ENCODE measurements at regions of chr19 and their contacts with region 1.

Region 1: GRCh38 chr19:18304458-18305310 is 18.2 kb downstream of the LSM4 start:
- DNase-seq: peak; percentile 82 to 89
- ATAC-seq: peak; percentile 78 to 87 (median 79)
- H3K4me3 ChIP-seq: peak overlapping the region; percentile 59
- H3K4me3 Mint-ChIP-seq: peak overlapping the region; percentile 86
- H3K27ac ChIP-seq: peak overlapping the region; percentile 99
- H3K27ac Mint-ChIP-seq: peak overlapping the region; percentile 96 to 97
- H3K4me1 ChIP-seq: peaks cover 64% of the 10 kb centered on the region
- H3K4me1 Mint-ChIP-seq: peaks cover 17 to 23% of the 10 kb centered on the region in 2 donors
- H3K27me3 ChIP-seq: no peaks in the 10 kb centered on the region
- H3K27me3 Mint-ChIP-seq: no peaks in the 10 kb centered on the region
- CTCF ChIP-seq: no peak

Region 2: DNA sequence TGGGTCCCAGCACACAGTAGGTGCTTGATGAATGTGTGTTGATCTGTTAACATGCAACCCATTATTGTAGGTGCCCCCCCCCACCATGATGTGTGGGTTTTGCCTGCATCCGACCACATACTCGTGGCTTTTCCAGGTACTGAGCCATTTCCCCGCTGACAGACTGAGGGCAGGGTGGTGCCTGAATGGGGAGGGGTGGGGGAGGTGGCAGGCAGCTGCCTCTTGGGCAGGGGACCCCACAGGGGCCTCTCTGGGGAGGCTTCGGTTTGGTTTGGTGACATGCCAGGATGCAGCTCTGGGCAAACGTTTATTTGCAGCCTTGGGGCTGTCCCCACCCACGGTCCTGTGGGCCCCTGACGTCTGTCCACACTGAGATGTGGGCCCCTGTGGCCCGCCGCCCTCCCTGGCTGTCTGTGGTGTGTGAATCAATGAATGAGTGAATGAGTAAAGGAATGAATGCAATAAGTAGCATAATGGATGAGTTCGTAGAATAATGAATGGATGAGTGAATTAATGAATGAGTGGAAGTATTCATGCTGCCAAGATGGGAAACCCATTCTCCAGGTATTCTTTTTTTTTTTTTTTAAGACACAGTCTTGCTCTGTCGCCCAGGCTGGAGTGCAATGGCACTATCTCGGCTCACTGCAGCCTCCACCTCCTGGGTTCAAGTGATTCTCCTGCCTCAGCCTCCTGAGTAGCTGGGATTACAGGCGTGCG is 14.2 kb before region 1 on chr19:
- intact Hi-C with region 1: loop called (anchors 1 kb)
- DNase-seq: peak; percentile 76 to 91
- ATAC-seq: peak; percentile 50 to 72 (median 72)
- H3K4me3 ChIP-seq: no peak overlapping the region
- H3K4me3 Mint-ChIP-seq: peak overlapping the region; percentile 82
- H3K27ac ChIP-seq: peak overlapping the region; percentile 99
- H3K27ac Mint-ChIP-seq: peak overlapping the region; percentile 89
- H3K4me1 ChIP-seq: peaks cover 67% of the 10 kb centered on the region
- H3K4me1 Mint-ChIP-seq: peaks cover 47 to 58% of the 10 kb centered on the region in 2 donors
- H3K27me3 ChIP-seq: no peaks in the 10 kb centered on the region
- H3K27me3 Mint-ChIP-seq: no peaks in the 10 kb centered on the region
- CTCF ChIP-seq: no peak

Region 3: GRCh38 chr19:18388100-18388959 is 83.6 kb after region 1 on chr19:
- intact Hi-C with region 1: no loop called
- DNase-seq: peak; percentile 82 to 88
- ATAC-seq: peak; percentile 92 to 97 (median 95)
- H3K4me3 ChIP-seq: peak overlapping the region; percentile 23
- H3K4me3 Mint-ChIP-seq: peak overlapping the region; percentile 82
- H3K27ac ChIP-seq: no peak overlapping the region
- H3K27ac Mint-ChIP-seq: peak overlapping the region; percentile 53 to 83
- H3K4me1 ChIP-seq: peaks cover 42% of the 10 kb centered on the region
- H3K4me1 Mint-ChIP-seq: peaks cover 5 to 18% of the 10 kb centered on the region in 2 donors
- H3K27me3 ChIP-seq: peaks cover 13% of the 10 kb centered on the region
- H3K27me3 Mint-ChIP-seq: no peaks in the 10 kb centered on the region
- CTCF ChIP-seq: peak; percentile 100

Measured in natural killer cell (primary cell).